BJ (cell line): ENCODE measurements at regions of chr11 and their contacts with region 1.

Region 1: DNA sequence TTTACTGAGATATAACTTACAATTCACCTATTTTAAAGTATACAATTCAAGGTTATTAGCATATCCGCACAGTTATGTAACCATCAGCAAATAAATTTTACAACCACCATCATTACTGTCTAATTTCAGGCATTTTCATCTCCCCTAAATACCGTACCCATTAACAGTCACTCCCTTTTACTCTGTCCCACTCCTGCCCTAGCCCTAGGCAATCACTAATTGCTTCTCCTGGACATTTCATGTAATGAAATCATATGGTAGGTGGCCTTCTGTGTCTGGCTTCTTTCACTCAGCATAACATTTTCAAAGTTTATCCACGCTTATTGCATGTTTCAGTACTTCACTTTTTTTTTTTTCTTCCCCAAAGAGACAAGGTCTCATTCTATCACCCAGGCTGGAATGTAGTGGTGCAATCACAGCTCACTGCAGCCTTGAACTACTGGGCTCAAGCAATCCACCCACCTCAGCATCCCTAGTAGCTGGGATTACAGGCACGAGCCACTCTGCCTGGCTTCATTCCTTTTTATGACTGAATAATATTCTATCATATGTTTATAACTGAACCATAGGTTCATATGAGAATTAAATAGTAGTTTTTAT is 61.4 kb upstream of the CHRM4 start:
- DNase-seq: no peak
- H3K4me3 ChIP-seq: no peak overlapping the region
- H3K27me3 ChIP-seq: no peaks in the 10 kb centered on the region
- CTCF ChIP-seq: no peak

Region 2: GRCh38 chr11:46472670-46472994 is 19.6 kb after region 1 on chr11:
- CTCF ChIA-PET with region 1: no interaction called
- POLR2A ChIA-PET with region 1: interaction called, 11 read pairs
- DNase-seq: no peak
- H3K4me3 ChIP-seq: no peak overlapping the region
- H3K27me3 ChIP-seq: no peaks in the 10 kb centered on the region
- CTCF ChIP-seq: no peak